A673 (cell line): ENCODE measurements at regions of chr3 and their contacts with region 1.

Region 1: GRCh38 chr3:15268033-15268631 is 62.1 kb downstream of the CAPN7 start:
- DNase-seq: peak; percentile 93
- H3K4me3 ChIP-seq: no peak overlapping the region
- H3K27ac ChIP-seq: no peak overlapping the region
- H3K4me1 ChIP-seq: peaks cover 24% of the 10 kb centered on the region
- H3K27me3 ChIP-seq: no peaks in the 10 kb centered on the region
- CTCF ChIP-seq: peak; percentile 97

Region 2: DNA sequence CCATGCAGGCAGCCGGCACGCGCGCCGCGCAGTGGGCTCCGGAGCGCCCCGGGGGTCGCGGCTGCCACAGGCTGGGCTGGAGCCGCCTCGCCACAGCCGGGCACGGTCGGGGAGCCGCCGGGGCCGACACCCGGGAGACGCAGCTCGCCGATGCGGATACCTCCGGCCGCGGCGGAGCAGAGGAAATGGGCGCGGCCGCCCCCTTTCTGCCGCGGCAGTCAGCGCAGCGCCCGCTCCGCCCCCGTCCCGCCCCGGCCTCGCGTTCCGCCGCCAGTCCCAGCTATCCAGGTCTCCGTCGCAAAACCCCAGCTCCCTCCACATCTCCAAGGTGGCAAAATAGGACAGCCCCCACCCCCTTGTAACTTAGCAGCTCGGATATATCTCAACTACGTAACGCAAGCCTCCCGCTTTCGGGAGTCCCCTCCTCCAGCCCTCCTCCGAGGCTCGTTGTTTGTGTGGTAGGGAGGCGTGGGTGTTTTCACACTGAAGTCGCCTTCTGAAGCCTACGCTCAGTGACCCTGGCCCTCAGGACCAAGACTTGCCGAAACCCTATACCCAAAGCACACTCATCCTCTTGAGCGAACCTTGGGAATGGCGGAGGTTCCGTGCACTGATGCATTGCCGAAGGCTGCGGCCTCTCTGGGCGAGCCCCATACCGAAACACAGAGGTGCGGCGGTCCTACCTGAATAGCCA is 64.4 kb after region 1 on chr3 and contains the start of gene SH3BP5:
- CTCF ChIA-PET with region 1: interaction called, 8 read pairs
- POLR2A ChIA-PET with region 1: no interaction called
- intact Hi-C with region 1: loop called (anchors 2 kb)
- DNase-seq: peak; percentile 85
- H3K4me3 ChIP-seq: peak within 1 kb of the TSS; percentile 89
- H3K27ac ChIP-seq: peak within 1 kb of the TSS; percentile 44
- H3K4me1 ChIP-seq: peaks cover 44% of the 10 kb centered on the region
- H3K27me3 ChIP-seq: no peaks in the 10 kb centered on the region
- CTCF ChIP-seq: peak; percentile 58
- total RNA-seq, gene SH3BP5: 20.3 and 22.5 TPM in 2 replicates

Region 3: GRCh38 chr3:15377961-15378791 is 110.0 kb after region 1 on chr3:
- CTCF ChIA-PET with region 1: interaction called, 6 read pairs
- POLR2A ChIA-PET with region 1: no interaction called
- intact Hi-C with region 1: loop called (anchors 1 kb)
- DNase-seq: peak; percentile 96
- H3K4me3 ChIP-seq: no peak overlapping the region
- H3K27ac ChIP-seq: peak overlapping the region; percentile 62
- H3K4me1 ChIP-seq: peaks cover 3% of the 10 kb centered on the region
- H3K27me3 ChIP-seq: no peaks in the 10 kb centered on the region
- CTCF ChIP-seq: peak; percentile 85

Region 4: DNA sequence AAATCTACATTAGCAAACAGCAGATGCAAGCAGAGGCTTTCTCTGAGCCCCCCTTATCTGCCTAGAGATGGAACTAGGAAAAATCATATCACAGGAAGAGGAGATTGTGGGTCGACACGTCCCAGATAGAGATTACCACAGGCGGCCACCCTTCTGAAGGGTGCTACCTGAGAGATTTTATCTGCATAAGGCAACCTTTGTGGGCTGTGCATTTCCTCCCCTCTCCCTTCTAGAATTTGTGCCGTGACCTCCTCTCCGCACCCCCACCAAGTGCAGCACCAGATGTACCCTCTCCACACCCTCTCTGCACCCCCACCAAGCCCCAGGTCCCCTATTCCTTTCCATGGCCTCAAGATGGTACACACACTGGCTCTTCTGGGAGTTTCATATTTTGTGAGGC is 131.8 kb after region 1 on chr3:
- CTCF ChIA-PET with region 1: interaction called, 22 read pairs
- POLR2A ChIA-PET with region 1: no interaction called
- intact Hi-C with region 1: loop called (anchors 2 kb)
- DNase-seq: no peak
- H3K4me3 ChIP-seq: no peak overlapping the region
- H3K27ac ChIP-seq: no peak overlapping the region
- H3K4me1 ChIP-seq: no peaks in the 10 kb centered on the region
- H3K27me3 ChIP-seq: no peaks in the 10 kb centered on the region
- CTCF ChIP-seq: no peak

Region 5: GRCh38 chr3:15405448-15406050 is 137.4 kb after region 1 on chr3:
- CTCF ChIA-PET with region 1: interaction called, 22 read pairs
- POLR2A ChIA-PET with region 1: no interaction called
- intact Hi-C with region 1: no loop called
- DNase-seq: peak; percentile 73
- H3K4me3 ChIP-seq: no peak overlapping the region
- H3K27ac ChIP-seq: no peak overlapping the region
- H3K4me1 ChIP-seq: no peaks in the 10 kb centered on the region
- H3K27me3 ChIP-seq: no peaks in the 10 kb centered on the region
- CTCF ChIP-seq: peak; percentile 75